Activated CD4-positive, alpha-beta memory T cell treated with anti-CD3 and anti-CD28 coated beads for 36 hours (primary cell): ENCODE measurements at regions of chr11 and their contacts with region 1.

Region 1: GRCh38 chr11:61509043-61510029 is 787 bp downstream of the LRRC10B start:
- DNase-seq: peak; percentile 84
- H3K4me3 Mint-ChIP-seq: peak overlapping the region; percentile 20
- H3K27ac Mint-ChIP-seq: no peak overlapping the region
- H3K4me1 Mint-ChIP-seq: peaks cover 8% of the 10 kb centered on the region
- H3K27me3 Mint-ChIP-seq: peaks cover 44% of the 10 kb centered on the region

Region 2: GRCh38 chr11:61627567-61628445 is 118.5 kb after region 1 on chr11:
- CTCF ChIA-PET with region 1: interaction called, 3 read pairs
- POLR2A ChIA-PET with region 1: no interaction called
- intact Hi-C with region 1: loop called (anchors 10 kb)
- DNase-seq: peak; percentile 57
- H3K4me3 Mint-ChIP-seq: no peak overlapping the region
- H3K27ac Mint-ChIP-seq: no peak overlapping the region
- H3K4me1 Mint-ChIP-seq: no peaks in the 10 kb centered on the region
- H3K27me3 Mint-ChIP-seq: peaks cover 15% of the 10 kb centered on the region